ENCODE measurements at regions of chr12 and their contacts with region 1.

Region 1: DNA sequence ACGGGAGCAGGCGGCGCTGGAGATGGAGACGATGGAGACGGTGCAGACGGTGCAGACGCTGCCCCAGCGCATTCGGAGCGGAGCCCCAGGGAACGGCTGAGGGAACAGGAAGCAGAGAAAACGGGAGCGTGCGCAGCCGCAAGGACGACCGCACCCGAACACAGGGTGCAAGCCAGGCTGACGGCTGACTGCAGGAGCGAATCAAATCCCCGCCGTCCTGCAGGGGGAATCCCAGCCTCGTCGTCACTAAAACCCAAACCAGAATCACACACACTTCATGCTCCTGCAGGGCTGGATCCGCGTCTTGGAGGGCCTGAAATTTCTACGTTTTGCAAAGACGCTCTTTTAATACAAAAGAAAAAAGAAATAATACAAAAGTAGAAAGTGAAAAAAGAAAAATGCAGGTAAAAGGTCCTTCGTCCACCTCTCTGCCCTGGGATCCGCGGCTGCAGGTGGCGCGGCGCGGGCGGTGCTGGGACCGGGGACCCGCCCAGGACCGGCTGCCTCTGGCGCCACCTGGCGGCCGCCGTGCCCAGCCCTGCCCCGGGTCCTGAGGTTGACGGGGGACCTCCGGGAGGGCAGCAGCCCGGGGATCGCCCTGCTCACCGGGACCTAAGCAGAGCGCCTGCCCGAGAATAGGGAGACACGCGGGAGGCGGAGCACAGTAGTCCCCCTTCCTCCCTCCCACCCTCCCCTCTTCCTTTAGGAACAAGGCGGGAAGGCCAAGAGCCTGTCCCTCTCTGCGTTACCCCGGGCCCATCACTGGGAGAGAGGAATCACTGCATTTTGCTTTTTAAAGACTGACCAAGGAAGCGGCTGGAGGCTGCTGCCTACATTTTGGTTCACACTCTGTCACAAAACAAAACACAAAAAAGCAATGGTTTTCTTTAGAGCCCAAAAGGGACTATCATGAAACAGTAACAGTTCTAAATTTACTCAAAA is 20.1 kb downstream of the STX2 start:
- DNase-seq: peak in 9 of 10 donors; percentile 33 to 81 (median 66)
- H3K4me3 ChIP-seq: peak overlapping the region; percentile 33 to 69 (median 52)
- H3K27ac ChIP-seq: peak overlapping the region in 51 of 59 donors; percentile 0 to 85 (median 57)
- H3K27me3 ChIP-seq: no peaks in the 10 kb centered on the region
- CTCF ChIP-seq: peak; percentile 67 to 98 (median 90)

Region 2: GRCh38 chr12:130761537-130762318 is 57.2 kb before region 1 on chr12:
- intact Hi-C with region 1: loop called in 1 of 2 experiments (anchors 1 kb)
- DNase-seq: peak; percentile 22 to 86 (median 72)
- H3K4me3 ChIP-seq: peak overlapping the region in 35 of 59 donors; percentile 10 to 55 (median 31)
- H3K27ac ChIP-seq: no peak overlapping the region
- H3K27me3 ChIP-seq: peaks cover 0 to 13% (median 0%) of the 10 kb centered on the region in 45 donors
- CTCF ChIP-seq: peak in 54 of 56 donors; percentile 31 to 77 (median 61)

Region 3: DNA sequence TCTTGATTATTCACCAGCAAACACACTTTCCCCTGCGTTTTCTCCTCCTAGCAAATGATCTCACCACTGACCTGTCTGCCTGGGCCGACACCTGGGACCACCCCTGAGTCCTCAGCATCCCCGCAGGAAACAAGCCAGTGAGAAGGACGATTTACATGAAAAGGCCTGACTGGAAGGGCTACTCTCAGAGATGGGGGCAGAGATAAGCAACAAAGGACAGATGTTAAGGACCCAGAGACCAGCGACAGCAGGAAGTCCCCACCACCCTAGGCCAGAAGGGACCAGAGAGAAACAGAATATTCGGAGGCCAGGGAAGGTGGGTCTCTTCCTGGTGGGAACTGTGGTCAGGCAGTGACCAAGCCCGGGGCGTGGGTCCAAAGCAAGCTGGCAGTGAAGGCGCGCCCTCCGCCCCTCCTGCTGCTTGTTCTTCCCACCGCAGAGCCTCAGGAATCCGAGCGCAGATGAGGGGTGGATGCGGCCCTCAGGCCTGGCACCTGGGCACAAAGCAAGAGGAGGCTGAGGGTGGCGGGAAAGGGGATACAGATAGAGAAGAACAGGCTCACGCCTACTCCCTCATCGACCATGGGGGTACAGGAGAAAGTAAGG is 35.7 kb before region 1 on chr12:
- intact Hi-C with region 1: loop called in 1 of 2 experiments (anchors 5 kb)
- DNase-seq: no peak
- H3K4me3 ChIP-seq: no peak overlapping the region
- H3K27ac ChIP-seq: no peak overlapping the region
- H3K27me3 ChIP-seq: no peaks in the 10 kb centered on the region
- CTCF ChIP-seq: no peak

Measured in dorsolateral prefrontal cortex (tissue), 120 donors.